Cardiac septum (tissue), 1 donor: ENCODE measurements at regions of chr17 and their contacts with region 1.

Region 1: DNA sequence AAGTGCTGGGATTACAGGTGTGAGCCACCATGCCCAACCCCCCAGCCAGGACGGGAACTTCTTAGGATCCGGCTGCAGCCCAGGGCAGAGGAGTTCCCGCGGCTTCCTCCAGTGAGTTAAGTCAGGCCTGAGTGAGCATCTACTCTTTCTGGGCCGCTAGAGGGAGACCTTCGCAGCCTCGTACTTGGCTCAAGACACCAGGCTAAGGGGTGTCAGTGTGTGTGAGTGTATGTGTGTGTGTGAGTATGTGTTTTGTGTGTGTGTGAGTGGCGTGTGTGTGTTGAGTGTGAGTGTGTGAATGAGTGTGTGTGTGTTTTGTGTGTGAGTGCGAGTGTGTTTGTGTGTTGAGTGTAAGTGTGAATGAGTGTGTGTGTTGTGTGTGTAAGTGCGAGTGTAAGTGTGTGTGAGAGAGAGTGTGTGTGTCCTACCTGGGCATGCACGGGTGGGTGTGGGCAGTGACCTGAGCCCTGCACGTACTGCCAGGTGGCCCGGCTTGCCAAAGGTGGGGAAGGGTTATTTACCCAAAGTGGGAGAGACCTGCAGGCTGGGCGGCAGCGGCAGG is 58.5 kb downstream of the TMEM235 start:
- DNase-seq: peak; percentile 93

Region 2: GRCh38 chr17:78341559-78342448 is 51.9 kb after region 1 on chr17:
- intact Hi-C with region 1: loop called (anchors 5 kb)
- DNase-seq: peak; percentile 92

Region 3: GRCh38 chr17:78421484-78422266 is 131.8 kb after region 1 on chr17:
- intact Hi-C with region 1: loop called (anchors 2 kb)
- DNase-seq: peak; percentile 93